A549 (cell line): ENCODE measurements at regions of chr19 and their contacts with region 1.

Region 1: DNA sequence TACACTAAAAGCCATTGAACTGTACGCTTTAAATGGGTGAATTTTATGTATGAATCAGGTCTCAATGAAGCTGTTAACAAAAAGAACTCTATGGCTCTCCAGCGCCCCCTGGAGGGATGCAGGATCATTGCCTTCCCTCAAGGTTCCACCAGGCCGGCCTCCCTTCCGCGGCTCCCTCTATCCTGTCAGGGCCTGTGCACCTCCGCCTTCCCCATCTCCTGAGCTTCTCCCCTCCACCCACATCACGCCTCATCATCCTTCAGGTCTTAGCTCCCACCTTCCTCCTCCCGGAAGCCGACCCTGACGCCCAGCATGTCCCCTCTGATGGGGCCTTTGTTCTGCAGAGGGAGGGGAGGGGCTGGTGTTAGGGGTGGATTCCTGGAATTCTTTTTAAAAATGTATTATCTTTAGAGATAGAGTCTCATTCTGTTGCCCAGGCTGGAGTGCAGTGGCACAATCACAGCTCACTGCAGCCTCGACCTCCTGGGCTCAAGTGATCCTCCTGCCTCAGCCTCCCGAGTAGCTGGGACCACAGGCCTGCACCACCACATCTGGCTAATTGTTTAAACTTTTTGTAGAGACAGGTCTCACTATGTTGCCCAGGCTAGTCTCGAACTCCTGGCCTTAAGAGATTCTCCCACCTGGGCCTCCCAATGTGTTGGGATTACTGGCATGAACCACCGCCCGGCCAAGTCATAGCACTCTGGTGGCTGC is 27.7 kb downstream of the MEIS3 start:
- DNase-seq: peak; percentile 75 to 81
- ATAC-seq: peak; percentile 91 to 93
- H3K4me3 ChIP-seq: no peak overlapping the region
- H3K27ac ChIP-seq: peak overlapping the region in 1 of 2 experiments; percentile 42; a peak in 1 of 6 replicates
- H3K4me1 ChIP-seq: no peaks in the 10 kb centered on the region
- CTCF ChIP-seq: peak; percentile 98
- EP300 ChIP-seq: no peak
- POLR2A ChIP-seq: no peak
- RAD21 ChIP-seq: peak; percentile 89 to 91

Region 2: DNA sequence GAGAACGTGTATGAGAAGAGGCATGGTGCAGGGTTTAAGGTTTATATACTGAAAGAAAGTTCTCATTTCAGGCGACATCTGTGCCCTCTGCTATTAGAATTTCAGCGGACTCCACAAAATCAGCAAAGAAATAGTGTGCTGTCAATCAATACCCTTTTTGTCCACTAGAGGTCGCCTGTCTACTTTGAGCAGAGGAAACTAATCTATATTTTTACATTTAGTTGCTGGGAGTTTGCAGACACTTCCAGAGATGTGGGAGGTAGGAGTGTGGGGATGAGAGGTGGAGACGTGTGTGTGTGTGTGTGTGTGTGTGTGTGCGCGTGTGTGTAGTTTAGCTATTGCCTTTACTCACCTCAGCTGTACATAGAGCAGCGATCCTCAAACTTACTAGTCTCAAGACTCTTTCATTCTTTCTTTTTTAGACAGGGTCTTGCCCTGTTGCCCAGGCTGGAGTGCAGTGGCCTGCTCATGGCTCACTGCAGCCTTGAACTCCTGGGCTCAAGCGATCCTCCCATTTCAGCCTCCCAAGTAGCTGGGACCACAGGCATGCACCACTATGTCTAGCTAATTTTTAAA is 107.3 kb before region 1 on chr19:
- CTCF ChIA-PET with region 1: interaction called, 198 read pairs
- POLR2A ChIA-PET with region 1: no interaction called
- DNase-seq: peak; percentile 50 to 77
- ATAC-seq: peak; percentile 34 to 35; a peak in 3 of 6 replicates
- H3K4me3 ChIP-seq: no peak overlapping the region
- H3K27ac ChIP-seq: no peak overlapping the region
- H3K4me1 ChIP-seq: peaks cover 12% of the 10 kb centered on the region
- CTCF ChIP-seq: peak; percentile 92
- EP300 ChIP-seq: no peak
- POLR2A ChIP-seq: no peak
- RAD21 ChIP-seq: peak; percentile 71 to 78

Region 3: GRCh38 chr19:47315125-47315821 is 76.4 kb before region 1 on chr19:
- CTCF ChIA-PET with region 1: interaction called, 18 read pairs
- POLR2A ChIA-PET with region 1: no interaction called
- DNase-seq: peak; percentile 98 to 99
- ATAC-seq: peak; percentile 94 to 96
- H3K4me3 ChIP-seq: no peak overlapping the region
- H3K27ac ChIP-seq: peak overlapping the region; percentile 74 to 85
- H3K4me1 ChIP-seq: peaks cover 31% of the 10 kb centered on the region
- CTCF ChIP-seq: no peak
- EP300 ChIP-seq: peak; percentile 91 to 96; a peak in 3 of 5 replicates
- POLR2A ChIP-seq: no peak
- RAD21 ChIP-seq: peak; percentile 4 to 53

Region 4: GRCh38 chr19:47348819-47349795 is 42.6 kb before region 1 on chr19 and contains the start of gene DHX34:
- CTCF ChIA-PET with region 1: interaction called, 43 read pairs
- POLR2A ChIA-PET with region 1: no interaction called
- DNase-seq: peak; percentile 100
- ATAC-seq: peak; percentile 97 to 98
- H3K4me3 ChIP-seq: peak within 1 kb of the TSS; percentile 74
- H3K27ac ChIP-seq: peak within 1 kb of the TSS; percentile 88 to 92
- H3K4me1 ChIP-seq: peaks cover 22% of the 10 kb centered on the region
- CTCF ChIP-seq: peak; percentile 97
- EP300 ChIP-seq: no peak
- POLR2A ChIP-seq: peak; percentile 91
- RAD21 ChIP-seq: peak in 1 of 2 experiments; percentile 45; a peak in 2 of 5 replicates
- polyA plus RNA-seq, gene DHX34: 12.4 and 14.4 TPM in 2 replicates

Region 5: GRCh38 chr19:47370045-47370611 is 21.5 kb before region 1 on chr19:
- CTCF ChIA-PET with region 1: interaction called, 138 read pairs
- POLR2A ChIA-PET with region 1: no interaction called
- DNase-seq: no peak
- ATAC-seq: peak; percentile 12 to 35; a peak in 1 of 6 replicates
- H3K4me3 ChIP-seq: no peak overlapping the region
- H3K27ac ChIP-seq: 0 out of 6 replicates have a peak overlapping the region, but pooled peaks of 1 of the 2 experiments have one; percentile 14
- H3K4me1 ChIP-seq: peaks cover 7% of the 10 kb centered on the region; the same call in 1 of the 3 replicates
- CTCF ChIP-seq: no peak
- EP300 ChIP-seq: no peak
- POLR2A ChIP-seq: no peak
- RAD21 ChIP-seq: no peak